A673 (cell line): ENCODE measurements at regions of chr5 and their contacts with region 1.

Region 1: GRCh38 chr5:98474782-98475181 is 298.7 kb upstream of the RGMB start:
- DNase-seq: no peak
- H3K4me3 ChIP-seq: no peak overlapping the region
- H3K27ac ChIP-seq: no peak overlapping the region
- H3K4me1 ChIP-seq: no peaks in the 10 kb centered on the region
- H3K27me3 ChIP-seq: peaks cover 33% of the 10 kb centered on the region
- CTCF ChIP-seq: no peak

Region 2: DNA sequence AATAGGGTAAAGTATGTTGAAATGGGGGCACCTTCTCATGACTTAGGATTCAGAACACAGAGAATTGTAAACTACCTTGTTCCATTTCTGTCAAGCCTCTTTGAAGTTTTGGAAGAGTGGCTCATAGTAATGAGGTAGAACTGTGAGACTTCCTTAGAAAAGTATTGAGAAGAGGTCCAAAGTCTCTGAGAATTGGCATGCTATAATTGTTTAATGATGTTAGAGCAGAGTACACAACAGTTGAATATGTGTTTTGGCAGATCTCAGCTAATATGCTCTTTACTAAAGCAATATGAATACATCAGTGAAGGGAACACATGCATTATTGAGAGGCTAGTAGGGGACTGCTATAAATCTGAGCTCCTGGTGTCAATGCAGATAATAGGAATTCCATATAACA is 712.3 kb before region 1 on chr5:
- CTCF ChIA-PET with region 1: no interaction called
- POLR2A ChIA-PET with region 1: no interaction called
- intact Hi-C with region 1: no loop called
- DNase-seq: no peak
- H3K4me3 ChIP-seq: no peak overlapping the region
- H3K27ac ChIP-seq: no peak overlapping the region
- H3K4me1 ChIP-seq: no peaks in the 10 kb centered on the region
- H3K27me3 ChIP-seq: no peaks in the 10 kb centered on the region
- CTCF ChIP-seq: no peak

Region 3: DNA sequence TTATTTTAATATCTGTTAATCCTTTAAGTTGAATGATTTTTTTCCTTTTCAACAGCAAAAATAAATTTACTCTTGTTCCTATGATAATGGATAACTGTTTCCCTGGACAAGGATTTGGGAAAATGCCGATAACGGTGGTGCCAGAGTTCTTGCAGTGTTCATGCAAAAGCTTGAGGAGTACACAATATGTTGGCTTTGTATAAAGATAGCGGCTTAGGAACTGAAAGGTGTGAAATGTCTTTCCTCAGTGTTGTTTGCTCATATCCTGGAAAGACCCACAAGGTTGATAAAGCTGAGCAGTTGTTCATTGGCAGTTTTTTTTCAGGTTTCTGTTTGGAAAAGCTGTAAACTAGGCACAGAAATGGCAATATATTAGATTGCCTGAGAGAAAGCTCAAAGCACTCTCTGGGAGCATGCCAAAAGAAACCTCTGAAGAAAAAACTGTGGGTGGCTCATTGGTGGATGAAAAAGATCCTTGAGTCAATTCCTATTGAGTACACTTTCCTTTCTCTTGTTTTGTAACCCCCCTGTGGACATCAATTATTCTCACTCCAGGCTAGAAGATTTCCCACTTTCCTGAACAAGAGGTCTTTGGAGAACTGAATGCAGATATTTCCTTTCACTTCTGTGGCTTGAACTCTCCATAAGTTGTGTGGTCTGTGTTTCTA is 181.5 kb after region 1 on chr5:
- CTCF ChIA-PET with region 1: no interaction called
- POLR2A ChIA-PET with region 1: interaction called, 15 read pairs
- intact Hi-C with region 1: no loop called
- DNase-seq: peak; percentile 3
- H3K4me3 ChIP-seq: no peak overlapping the region
- H3K27ac ChIP-seq: no peak overlapping the region
- H3K4me1 ChIP-seq: no peaks in the 10 kb centered on the region
- H3K27me3 ChIP-seq: peaks cover 24% of the 10 kb centered on the region
- CTCF ChIP-seq: no peak